ENCODE measurements at regions of chr13 and their contacts with region 1.

Region 1: DNA sequence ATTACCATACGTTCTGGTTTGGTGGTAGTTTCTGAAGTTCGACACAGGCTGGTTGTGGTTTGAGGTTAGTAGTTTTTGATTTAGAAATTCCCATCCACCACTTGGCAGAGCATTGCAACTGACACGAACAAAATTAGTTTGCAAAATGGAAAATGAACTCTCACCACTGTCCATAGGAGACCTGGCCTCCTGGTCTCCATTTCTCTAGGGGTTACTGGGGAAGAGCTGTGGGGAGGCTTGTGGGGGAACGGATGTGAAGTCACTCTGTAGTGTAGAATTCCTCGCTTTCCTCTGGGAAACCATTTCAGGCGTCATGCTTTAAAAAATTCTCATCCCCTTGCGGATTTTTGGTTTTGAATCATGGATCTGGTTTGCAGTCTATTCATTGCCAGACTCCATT is 321.5 kb upstream of the MAB21L1 start:
- DNase-seq: no peak
- H3K4me3 ChIP-seq: no peak overlapping the region
- H3K27ac ChIP-seq: no peak overlapping the region
- H3K4me1 ChIP-seq: peaks cover 0 to 3% (median 0%) of the 10 kb centered on the region in 4 experiments; a peak in 1 of 7 replicates
- H3K27me3 ChIP-seq: no peaks in the 10 kb centered on the region
- CTCF ChIP-seq: no peak
- EP300 ChIP-seq: no peak
- POLR2A ChIP-seq: no peak
- RAD21 ChIP-seq: no peak

Region 2: DNA sequence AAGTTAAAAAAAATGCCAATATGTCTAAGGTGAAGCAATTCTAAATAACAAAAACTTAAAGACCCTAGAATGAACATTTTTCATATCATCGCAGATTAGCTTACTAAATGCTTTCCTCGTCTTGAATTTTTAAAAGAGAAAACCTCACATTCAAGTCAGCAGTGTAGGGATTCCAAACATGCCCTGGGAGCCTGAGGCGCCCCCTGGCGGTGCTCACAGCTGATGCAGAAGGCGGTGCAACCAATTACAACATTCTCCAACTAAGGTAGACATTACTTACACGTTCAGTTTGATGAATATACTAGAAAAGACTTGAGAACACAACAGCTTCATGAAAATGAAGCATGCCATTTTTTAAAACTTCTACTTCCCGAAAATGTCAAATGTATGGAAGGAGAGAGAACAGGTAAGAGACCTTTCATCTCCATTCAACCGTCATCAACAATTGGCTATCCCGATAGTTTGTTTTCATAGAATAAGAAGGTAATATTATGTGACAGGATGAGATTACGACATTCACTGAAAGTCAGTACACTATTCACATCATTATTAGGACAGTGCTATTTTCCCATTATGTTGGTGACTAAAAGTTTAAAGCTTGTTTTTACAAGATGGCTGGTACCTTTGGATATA is 28.7 kb after region 1 on chr13:
- CTCF ChIA-PET with region 1: interaction called, 10 read pairs
- POLR2A ChIA-PET with region 1: no interaction called
- DNase-seq: peak in 1 of 2 experiments; percentile 80
- H3K4me3 ChIP-seq: no peak overlapping the region
- H3K27ac ChIP-seq: no peak overlapping the region
- H3K4me1 ChIP-seq: peaks cover 0 to 4% (median 4%) of the 10 kb centered on the region in 4 experiments; a peak in 4 of 7 replicates
- H3K27me3 ChIP-seq: no peaks in the 10 kb centered on the region; a peak in 1 of 7 replicates
- CTCF ChIP-seq: peak; percentile 62 to 80 (median 77)
- EP300 ChIP-seq: no peak
- POLR2A ChIP-seq: no peak
- RAD21 ChIP-seq: peak; percentile 26 to 55; a peak in 3 of 4 replicates